ENCODE measurements at regions of chr10 and their contacts with region 1.

Region 1: GRCh38 chr10:29969255-29970011 is 90.0 kb downstream of the JCAD start:
- DNase-seq: peak; percentile 60 to 86
- ATAC-seq: peak; percentile 95 to 97 (median 96)
- H3K4me3 ChIP-seq: no peak overlapping the region
- H3K27ac ChIP-seq: peak overlapping the region; percentile 77
- H3K4me1 ChIP-seq: peaks cover 26% of the 10 kb centered on the region
- H3K27me3 ChIP-seq: no peaks in the 10 kb centered on the region
- CTCF ChIP-seq: no peak

Region 2: GRCh38 chr10:29946953-29947700 is 22.3 kb before region 1 on chr10:
- intact Hi-C with region 1: loop called in 1 of 2 experiments (anchors 2 kb)
- DNase-seq: peak; percentile 70 to 84
- ATAC-seq: peak; percentile 87 to 92 (median 90)
- H3K4me3 ChIP-seq: peak overlapping the region; percentile 43
- H3K27ac ChIP-seq: peak overlapping the region; percentile 96
- H3K4me1 ChIP-seq: peaks cover 49% of the 10 kb centered on the region
- H3K27me3 ChIP-seq: no peaks in the 10 kb centered on the region
- CTCF ChIP-seq: no peak

Region 3: DNA sequence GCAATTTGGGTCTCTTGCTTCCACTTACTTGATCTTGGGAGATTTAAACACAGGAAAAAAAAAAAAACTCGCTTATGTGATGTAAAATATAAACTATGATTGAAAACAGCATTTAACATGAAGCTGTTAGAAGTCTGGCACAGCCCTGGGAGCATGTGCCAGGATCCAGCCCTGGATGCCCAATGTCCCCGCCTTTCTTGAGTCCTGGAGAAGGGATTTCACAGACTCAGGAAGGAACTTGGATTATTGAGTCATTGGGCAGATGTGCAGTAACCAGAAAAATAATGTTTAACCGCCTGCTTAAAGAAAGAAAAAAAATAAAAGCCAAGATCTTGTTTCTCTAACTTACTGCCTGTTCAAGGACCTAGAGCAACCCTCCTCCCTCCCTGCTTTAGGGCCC is 93.7 kb after region 1 on chr10:
- intact Hi-C with region 1: no loop called
- DNase-seq: no peak
- ATAC-seq: no peak
- H3K4me3 ChIP-seq: no peak overlapping the region
- H3K27ac ChIP-seq: no peak overlapping the region
- H3K4me1 ChIP-seq: no peaks in the 10 kb centered on the region
- H3K27me3 ChIP-seq: no peaks in the 10 kb centered on the region
- CTCF ChIP-seq: no peak

Measured in psoas muscle (tissue), 8 donors.